PC-3 (cell line): ENCODE measurements at regions of chr3 and their contacts with region 1.

Region 1: GRCh38 chr3:137105277-137105977 is 147.6 kb downstream of the IL20RB start:
- DNase-seq: peak; percentile 75
- ATAC-seq: peak; percentile 74
- H3K4me3 ChIP-seq: no peak overlapping the region
- H3K27ac ChIP-seq: no peak overlapping the region
- H3K4me1 ChIP-seq: no peaks in the 10 kb centered on the region
- H3K27me3 ChIP-seq: peaks cover 38% of the 10 kb centered on the region
- CTCF ChIP-seq: peak; percentile 78

Region 2: DNA sequence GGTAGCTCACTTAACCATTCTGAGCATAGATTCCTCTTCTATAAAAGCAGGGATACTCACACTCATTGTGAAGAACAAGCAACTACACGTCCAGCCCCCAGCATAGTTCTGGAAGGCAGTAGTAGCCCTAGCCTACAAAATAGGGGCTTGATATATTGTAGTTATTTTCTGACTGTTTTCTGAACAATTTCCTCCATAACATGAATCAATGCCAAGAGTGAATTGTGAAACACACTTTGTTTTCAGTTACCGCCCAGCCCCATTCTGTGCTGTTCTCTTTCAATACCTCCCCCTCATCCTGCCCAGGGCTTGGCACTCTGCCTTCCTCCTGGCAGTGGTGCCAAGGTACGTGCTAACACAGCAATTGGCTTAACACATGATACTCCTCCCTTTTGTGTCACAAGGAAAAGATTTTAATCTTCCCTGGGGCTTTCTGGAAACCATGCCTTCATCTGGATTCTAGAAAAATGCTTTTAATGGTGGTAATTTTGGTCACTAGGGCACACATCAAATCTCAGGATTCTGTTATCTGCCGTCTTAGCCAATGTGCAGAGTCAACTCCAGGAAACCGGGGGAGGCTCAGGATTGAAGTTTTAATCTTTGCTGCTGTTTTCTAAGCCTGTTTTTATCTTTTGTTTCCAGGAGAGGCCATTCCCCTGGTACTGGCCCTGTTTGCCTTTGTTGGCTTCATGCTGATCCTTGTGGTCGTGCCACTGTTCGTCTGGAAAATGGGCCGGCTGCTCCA is 110.5 kb before region 1 on chr3:
- CTCF ChIA-PET with region 1: no interaction called
- POLR2A ChIA-PET with region 1: no interaction called
- intact Hi-C with region 1: no loop called
- DNase-seq: peak; percentile 79
- ATAC-seq: peak; percentile 22
- H3K4me3 ChIP-seq: no peak overlapping the region
- H3K27ac ChIP-seq: 0 out of 2 replicates have a peak overlapping the region, but pooled peaks have one; percentile 23
- H3K4me1 ChIP-seq: peaks cover 12% of the 10 kb centered on the region
- H3K27me3 ChIP-seq: no peaks in the 10 kb centered on the region
- CTCF ChIP-seq: no peak

Region 3: GRCh38 chr3:137946345-137946973 is 841.0 kb after region 1 on chr3:
- CTCF ChIA-PET with region 1: no interaction called
- POLR2A ChIA-PET with region 1: no interaction called
- intact Hi-C with region 1: loop called (anchors 1 kb)
- DNase-seq: peak; percentile 81
- ATAC-seq: peak; percentile 38; the same call in 1 of the 2 replicates
- H3K4me3 ChIP-seq: no peak overlapping the region
- H3K27ac ChIP-seq: no peak overlapping the region
- H3K4me1 ChIP-seq: no peaks in the 10 kb centered on the region
- H3K27me3 ChIP-seq: no peaks in the 10 kb centered on the region
- CTCF ChIP-seq: peak; percentile 79

Region 4: GRCh38 chr3:137970914-137971831 is 865.7 kb after region 1 on chr3:
- CTCF ChIA-PET with region 1: interaction called, 3 read pairs
- POLR2A ChIA-PET with region 1: no interaction called
- intact Hi-C with region 1: loop called (anchors 1 kb)
- DNase-seq: peak; percentile 78
- ATAC-seq: peak; percentile 98
- H3K4me3 ChIP-seq: peak overlapping the region; percentile 48; the same call in 1 of the 2 replicates
- H3K27ac ChIP-seq: no peak overlapping the region
- H3K4me1 ChIP-seq: no peaks in the 10 kb centered on the region
- H3K27me3 ChIP-seq: no peaks in the 10 kb centered on the region
- CTCF ChIP-seq: peak; percentile 81

Region 5: DNA sequence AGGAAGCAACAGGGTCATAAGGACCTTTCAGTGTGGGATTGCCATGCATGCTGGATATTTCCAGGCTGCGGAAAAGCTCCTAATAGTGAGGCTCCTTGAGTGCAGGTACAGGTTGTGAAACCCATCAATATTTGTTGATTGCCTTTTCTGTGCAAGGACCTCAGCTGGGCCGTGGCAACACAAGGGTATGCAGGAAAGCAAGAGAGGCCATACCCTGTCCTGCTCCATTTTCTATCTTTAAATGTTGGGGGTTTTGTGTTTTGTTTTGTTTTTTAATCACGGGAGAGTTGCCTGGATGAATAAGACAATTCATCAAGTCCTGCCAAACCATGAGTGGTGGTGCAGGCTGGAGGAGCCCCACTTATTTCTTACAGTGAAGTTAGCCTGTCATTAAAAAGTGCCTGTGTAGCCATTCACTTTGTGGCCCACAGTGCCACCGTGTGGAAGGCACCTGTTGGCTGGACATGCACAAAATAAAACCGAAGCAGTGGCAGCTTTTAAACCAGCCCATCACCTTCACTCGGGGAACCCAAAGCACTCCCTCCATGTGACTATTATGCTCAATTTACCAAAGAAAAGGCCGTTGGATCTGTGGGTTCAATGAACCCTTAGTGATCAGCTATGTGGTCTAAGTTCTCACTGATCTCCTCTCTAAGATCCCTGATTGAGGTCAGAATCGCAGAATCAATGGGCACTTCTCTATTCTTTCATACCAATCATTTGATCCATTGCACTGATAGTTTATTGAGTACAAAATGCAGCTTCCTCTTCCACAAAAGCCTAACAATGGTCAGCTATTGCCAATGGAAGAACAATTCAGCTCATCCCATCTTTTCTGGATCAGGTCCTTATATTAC is 946.7 kb after region 1 on chr3:
- CTCF ChIA-PET with region 1: no interaction called
- POLR2A ChIA-PET with region 1: no interaction called
- intact Hi-C with region 1: loop called (anchors 2 kb)
- DNase-seq: peak; percentile 60
- ATAC-seq: peak; percentile 81
- H3K4me3 ChIP-seq: no peak overlapping the region
- H3K27ac ChIP-seq: no peak overlapping the region
- H3K4me1 ChIP-seq: no peaks in the 10 kb centered on the region
- H3K27me3 ChIP-seq: no peaks in the 10 kb centered on the region
- CTCF ChIP-seq: peak; percentile 79